ENCODE measurements at regions of chr2 and their contacts with region 1.

Region 1: GRCh38 chr2:233094614-233095013 is 34.5 kb downstream of the INPP5D start:
- DNase-seq: no peak
- H3K4me3 ChIP-seq: no peak overlapping the region
- H3K27ac ChIP-seq: no peak overlapping the region
- H3K4me1 ChIP-seq: no peaks in the 10 kb centered on the region
- H3K27me3 ChIP-seq: no peaks in the 10 kb centered on the region
- CTCF ChIP-seq: no peak

Region 2: GRCh38 chr2:232937278-232937906 is 157.2 kb before region 1 on chr2:
- CTCF ChIA-PET with region 1: no interaction called
- POLR2A ChIA-PET with region 1: no interaction called
- intact Hi-C with region 1: no loop called
- DNase-seq: peak; percentile 52 to 61
- H3K4me3 ChIP-seq: no peak overlapping the region
- H3K27ac ChIP-seq: no peak overlapping the region
- H3K4me1 ChIP-seq: peaks cover 10% of the 10 kb centered on the region
- H3K27me3 ChIP-seq: no peaks in the 10 kb centered on the region
- CTCF ChIP-seq: no peak

Region 3: DNA sequence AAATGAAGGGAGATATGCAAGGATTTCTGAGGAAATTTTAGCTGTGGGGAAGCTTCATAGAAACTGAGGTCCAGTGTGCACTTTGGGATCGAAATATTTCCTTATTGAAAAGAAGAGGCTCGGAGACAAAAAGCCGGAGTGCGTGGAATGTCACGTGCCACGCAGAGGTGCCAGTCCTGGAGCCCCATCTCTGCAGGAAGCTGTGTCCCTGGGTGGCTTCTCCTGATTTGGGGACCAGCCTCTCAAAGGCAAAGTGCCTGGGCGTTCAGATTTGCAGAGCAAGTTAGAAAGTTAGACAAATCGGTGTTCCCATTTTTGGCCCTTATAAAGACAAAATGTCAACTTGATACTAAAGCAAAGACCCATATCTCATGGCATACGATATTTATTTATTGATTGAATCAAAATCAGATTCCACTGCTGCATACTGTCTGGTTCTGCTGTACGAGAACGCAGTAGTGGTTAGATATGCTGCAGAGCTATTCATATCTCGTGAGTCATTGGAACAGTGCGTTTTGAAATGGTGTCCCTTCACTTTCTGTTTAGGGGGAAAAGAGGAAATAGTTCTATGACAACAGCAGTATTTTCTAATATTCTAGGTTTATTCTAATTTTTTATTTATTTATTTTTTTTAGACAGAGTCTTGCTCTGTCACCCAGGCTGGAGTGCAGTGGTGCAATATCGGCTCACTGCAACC is 147.8 kb after region 1 on chr2:
- CTCF ChIA-PET with region 1: no interaction called
- POLR2A ChIA-PET with region 1: interaction called, 11 read pairs
- intact Hi-C with region 1: no loop called
- DNase-seq: no peak
- H3K4me3 ChIP-seq: no peak overlapping the region
- H3K27ac ChIP-seq: no peak overlapping the region
- H3K4me1 ChIP-seq: peaks cover 72% of the 10 kb centered on the region
- H3K27me3 ChIP-seq: no peaks in the 10 kb centered on the region
- CTCF ChIP-seq: no peak